ENCODE measurements at regions of chr16 and their contacts with region 1.

Region 1: DNA sequence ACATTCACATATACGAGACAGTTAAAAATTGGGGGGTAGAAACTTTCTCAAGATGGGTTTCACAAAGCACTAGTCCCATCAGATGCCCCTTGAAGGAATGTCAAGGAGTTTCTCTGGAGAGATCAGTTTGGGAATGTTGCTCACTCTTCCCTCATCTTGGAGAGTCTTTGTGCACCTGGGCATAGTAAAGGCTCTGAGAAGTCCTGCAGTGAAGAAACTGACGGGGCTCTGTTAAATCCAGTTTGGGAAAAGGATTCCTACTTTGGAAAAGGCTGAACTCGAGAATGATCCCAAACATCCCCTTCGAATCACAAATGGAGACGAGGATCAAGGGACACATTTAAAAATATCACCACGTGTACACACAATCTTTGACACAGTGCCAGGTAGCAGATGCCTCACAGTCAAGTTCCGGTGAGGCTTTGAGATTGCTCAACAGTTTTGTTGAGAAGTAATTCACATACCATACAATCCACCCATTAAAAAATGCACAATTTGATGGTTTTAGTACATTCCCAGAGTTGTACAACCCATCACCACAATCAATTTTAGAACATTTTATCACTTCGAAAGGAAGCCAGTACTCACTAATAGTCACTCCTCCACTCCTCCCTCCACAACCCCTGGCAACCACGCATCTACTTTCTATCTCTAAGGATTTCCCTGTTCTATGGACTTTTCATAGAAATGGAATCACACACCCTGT is 203.4 kb upstream of the FOXF1 start:
- DNase-seq: peak; percentile 32
- H3K4me3 ChIP-seq: no peak overlapping the region
- H3K27ac ChIP-seq: peak overlapping the region; percentile 25 to 96 (median 94)
- H3K4me1 ChIP-seq: peaks cover 0 to 57% (median 49%) of the 10 kb centered on the region in 4 donors
- H3K27me3 ChIP-seq: no peaks in the 10 kb centered on the region
- CTCF ChIP-seq: no peak
- EP300 ChIP-seq: no peak
- POLR2A ChIP-seq: no peak

Region 2: GRCh38 chr16:86363057-86363490 is 56.1 kb after region 1 on chr16:
- intact Hi-C with region 1: loop called (anchors 2 kb)
- DNase-seq: peak; percentile 88
- H3K4me3 ChIP-seq: no peak overlapping the region
- H3K27ac ChIP-seq: peak overlapping the region; percentile 83 to 89 (median 85)
- H3K4me1 ChIP-seq: peaks cover 0 to 56% (median 46%) of the 10 kb centered on the region in 4 donors
- H3K27me3 ChIP-seq: no peaks in the 10 kb centered on the region
- CTCF ChIP-seq: no peak
- EP300 ChIP-seq: peak in 3 of 4 donors; percentile 25 to 84 (median 52)
- POLR2A ChIP-seq: no peak

Region 3: GRCh38 chr16:86498661-86499439 is 191.9 kb after region 1 on chr16:
- intact Hi-C with region 1: loop called (anchors 5 kb)
- DNase-seq: peak; percentile 88
- H3K4me3 ChIP-seq: peak overlapping the region; percentile 65 to 84 (median 68)
- H3K27ac ChIP-seq: peak overlapping the region; percentile 99 to 100 (median 99)
- H3K4me1 ChIP-seq: peaks cover 0 to 81% (median 59%) of the 10 kb centered on the region in 4 donors
- H3K27me3 ChIP-seq: peaks cover 0 to 31% (median 0%) of the 10 kb centered on the region in 3 donors
- CTCF ChIP-seq: no peak
- EP300 ChIP-seq: no peak
- POLR2A ChIP-seq: peak; percentile 8 to 9

Measured in sigmoid colon (tissue), 7 donors.